Caco-2 (cell line): ENCODE measurements at regions of chr2 and their contacts with region 1.

Region 1: GRCh38 chr2:235433860-235434259 is 60.0 kb upstream of the AGAP1 start:
- DNase-seq: no peak
- H3K4me3 ChIP-seq: no peak overlapping the region
- H3K4me3 Mint-ChIP-seq: no peak overlapping the region
- H3K27ac Mint-ChIP-seq: no peak overlapping the region
- H3K4me1 ChIP-seq: no peaks in the 10 kb centered on the region
- H3K4me1 Mint-ChIP-seq: no peaks in the 10 kb centered on the region
- H3K27me3 ChIP-seq: no peaks in the 10 kb centered on the region
- H3K27me3 Mint-ChIP-seq: peaks cover 4% of the 10 kb centered on the region
- CTCF ChIP-seq: peak in 1 of 2 experiments; percentile 7

Region 2: DNA sequence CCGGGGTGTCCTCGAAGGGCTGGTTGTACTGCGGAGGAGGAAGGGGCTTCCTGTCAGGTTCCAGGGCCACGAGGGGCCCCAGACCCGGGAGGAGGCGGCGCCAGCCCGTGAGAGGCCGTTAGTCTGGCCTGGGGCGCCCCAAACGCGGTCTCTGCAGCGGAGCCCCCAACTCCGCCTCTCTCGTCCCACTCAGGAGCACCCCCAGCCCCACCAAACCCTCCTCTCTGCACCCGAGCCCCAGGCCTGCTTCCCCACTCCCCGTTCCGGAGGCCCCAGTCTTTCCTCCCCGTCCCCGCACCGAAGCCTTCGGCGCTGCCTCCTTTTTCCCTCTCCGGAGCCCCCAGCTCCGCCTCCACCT is 1580.0 kb before region 1 on chr2:
- CTCF ChIA-PET with region 1: no interaction called
- POLR2A ChIA-PET with region 1: no interaction called
- intact Hi-C with region 1: no loop called
- DNase-seq: no peak
- H3K4me3 ChIP-seq: peak overlapping the region; percentile 71
- H3K4me3 Mint-ChIP-seq: peak overlapping the region; percentile 91
- H3K27ac Mint-ChIP-seq: peak overlapping the region; percentile 91
- H3K4me1 ChIP-seq: no peaks in the 10 kb centered on the region
- H3K4me1 Mint-ChIP-seq: peaks cover 6% of the 10 kb centered on the region
- H3K27me3 ChIP-seq: no peaks in the 10 kb centered on the region
- H3K27me3 Mint-ChIP-seq: no peaks in the 10 kb centered on the region
- CTCF ChIP-seq: no peak

Region 3: GRCh38 chr2:235551965-235552364 is 118.1 kb after region 1 on chr2:
- CTCF ChIA-PET with region 1: interaction called, 14 read pairs
- POLR2A ChIA-PET with region 1: no interaction called
- intact Hi-C with region 1: no loop called
- DNase-seq: peak; percentile 65
- H3K4me3 ChIP-seq: no peak overlapping the region
- H3K4me3 Mint-ChIP-seq: no peak overlapping the region
- H3K27ac Mint-ChIP-seq: peak overlapping the region; percentile 45
- H3K4me1 ChIP-seq: no peaks in the 10 kb centered on the region
- H3K4me1 Mint-ChIP-seq: no peaks in the 10 kb centered on the region
- H3K27me3 ChIP-seq: no peaks in the 10 kb centered on the region
- H3K27me3 Mint-ChIP-seq: no peaks in the 10 kb centered on the region
- CTCF ChIP-seq: peak; percentile 40 to 75

Region 4: GRCh38 chr2:235595422-235596010 is 161.7 kb after region 1 on chr2:
- CTCF ChIA-PET with region 1: interaction called, 11 read pairs
- POLR2A ChIA-PET with region 1: no interaction called
- intact Hi-C with region 1: loop called (anchors 5 kb)
- DNase-seq: peak; percentile 45 to 65
- H3K4me3 ChIP-seq: no peak overlapping the region
- H3K4me3 Mint-ChIP-seq: no peak overlapping the region
- H3K27ac Mint-ChIP-seq: no peak overlapping the region
- H3K4me1 ChIP-seq: no peaks in the 10 kb centered on the region
- H3K4me1 Mint-ChIP-seq: peaks cover 6% of the 10 kb centered on the region
- H3K27me3 ChIP-seq: no peaks in the 10 kb centered on the region
- H3K27me3 Mint-ChIP-seq: no peaks in the 10 kb centered on the region
- CTCF ChIP-seq: peak; percentile 64 to 72